BJ (cell line): ENCODE measurements at regions of chr15 and their contacts with region 1.

Region 1: DNA sequence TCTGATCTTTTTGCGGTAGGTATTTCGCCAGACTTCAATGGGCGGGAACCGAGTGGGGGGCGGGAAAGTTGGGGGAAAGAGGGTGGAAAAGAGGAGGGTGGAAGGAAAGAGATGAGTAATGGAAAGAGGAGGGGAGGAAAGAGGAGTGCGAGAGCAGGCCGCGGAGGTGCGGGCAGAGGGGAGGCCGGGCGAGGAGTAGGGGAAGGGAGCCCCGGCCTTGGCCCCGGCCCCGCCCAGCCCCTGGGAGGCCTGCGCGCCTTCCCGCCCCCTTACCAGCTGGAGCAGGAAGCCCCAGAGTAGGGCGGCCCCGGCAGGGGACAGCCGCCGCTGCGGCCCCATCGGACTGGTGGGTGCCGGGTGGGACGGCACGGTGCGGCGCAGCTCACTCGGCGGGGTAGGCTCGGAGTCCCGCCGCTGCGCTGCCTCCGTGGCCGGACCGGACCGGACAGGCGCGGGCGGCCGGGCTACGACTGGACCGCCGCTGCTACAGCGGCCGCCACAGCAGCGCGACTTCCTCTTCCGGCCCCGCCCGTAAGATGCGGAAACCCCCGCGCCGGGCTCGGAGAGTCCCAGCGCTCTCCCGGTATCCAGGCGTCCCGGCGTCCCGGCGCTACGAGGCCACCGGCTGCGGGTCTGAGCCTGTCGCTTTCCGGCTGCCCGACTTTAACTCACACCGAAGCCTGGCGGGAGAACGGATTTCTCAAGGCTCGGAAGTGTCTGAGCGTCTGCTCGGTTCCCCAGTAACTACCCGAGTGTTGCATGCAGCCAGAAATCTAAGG is at the start of gene SPPL2A:
- DNase-seq: peak; percentile 55
- H3K4me3 ChIP-seq: peak within 1 kb of the TSS; percentile 53
- H3K27me3 ChIP-seq: no peaks in the 10 kb centered on the region
- CTCF ChIP-seq: no peak
- polyA plus RNA-seq, gene SPPL2A: 48.6 and 84.5 TPM in 2 replicates

Region 2: DNA sequence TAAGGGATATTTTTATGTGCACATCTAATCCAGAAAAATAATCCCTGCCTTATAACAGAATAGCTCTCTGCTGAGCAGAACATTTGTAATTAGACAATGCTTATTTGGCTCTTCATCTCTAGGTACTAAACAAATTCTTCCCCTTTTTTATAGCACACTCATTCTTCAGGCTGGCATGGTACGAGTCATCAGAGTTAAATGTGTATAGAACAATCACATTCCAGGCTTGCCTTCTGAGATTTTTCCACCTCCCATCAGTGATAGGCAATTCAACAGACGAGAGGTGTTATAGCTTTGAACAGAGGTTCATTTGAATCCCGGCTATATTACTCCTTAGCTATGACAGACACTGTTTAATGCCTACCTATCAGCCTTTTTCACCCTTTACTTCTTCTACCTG is 21.5 kb after region 1 on chr15:
- CTCF ChIA-PET with region 1: no interaction called
- POLR2A ChIA-PET with region 1: interaction called, 13 read pairs
- DNase-seq: no peak
- H3K4me3 ChIP-seq: no peak overlapping the region
- H3K27me3 ChIP-seq: no peaks in the 10 kb centered on the region
- CTCF ChIP-seq: no peak